ENCODE measurements at regions of chr19 and their contacts with region 1.

Region 1: GRCh38 chr19:6273701-6274601 is 5.8 kb downstream of the MLLT1 start:
- DNase-seq: peak; percentile 88
- ATAC-seq: peak; percentile 84 to 89
- H3K4me3 ChIP-seq: peak overlapping the region; percentile 33
- H3K27ac ChIP-seq: peak overlapping the region; percentile 89
- H3K4me1 ChIP-seq: peaks cover 100% of the 10 kb centered on the region
- H3K27me3 ChIP-seq: no peaks in the 10 kb centered on the region
- CTCF ChIP-seq: no peak

Region 2: GRCh38 chr19:6038634-6039405 is 235.1 kb before region 1 on chr19:
- intact Hi-C with region 1: no loop called
- DNase-seq: no peak
- ATAC-seq: no peak
- H3K4me3 ChIP-seq: no peak overlapping the region
- H3K27ac ChIP-seq: no peak overlapping the region
- H3K4me1 ChIP-seq: no peaks in the 10 kb centered on the region
- H3K27me3 ChIP-seq: no peaks in the 10 kb centered on the region
- CTCF ChIP-seq: no peak

Region 3: GRCh38 chr19:6238643-6239281 is 35.2 kb before region 1 on chr19:
- intact Hi-C with region 1: loop called (anchors 5 kb)
- DNase-seq: peak; percentile 50
- ATAC-seq: peak in 1 of 2 donors; percentile 1
- H3K4me3 ChIP-seq: peak overlapping the region; percentile 14
- H3K27ac ChIP-seq: peak overlapping the region; percentile 77
- H3K4me1 ChIP-seq: peaks cover 93% of the 10 kb centered on the region
- H3K27me3 ChIP-seq: no peaks in the 10 kb centered on the region
- CTCF ChIP-seq: no peak